ENCODE measurements at regions of chr2 and their contacts with region 1.

Region 1: DNA sequence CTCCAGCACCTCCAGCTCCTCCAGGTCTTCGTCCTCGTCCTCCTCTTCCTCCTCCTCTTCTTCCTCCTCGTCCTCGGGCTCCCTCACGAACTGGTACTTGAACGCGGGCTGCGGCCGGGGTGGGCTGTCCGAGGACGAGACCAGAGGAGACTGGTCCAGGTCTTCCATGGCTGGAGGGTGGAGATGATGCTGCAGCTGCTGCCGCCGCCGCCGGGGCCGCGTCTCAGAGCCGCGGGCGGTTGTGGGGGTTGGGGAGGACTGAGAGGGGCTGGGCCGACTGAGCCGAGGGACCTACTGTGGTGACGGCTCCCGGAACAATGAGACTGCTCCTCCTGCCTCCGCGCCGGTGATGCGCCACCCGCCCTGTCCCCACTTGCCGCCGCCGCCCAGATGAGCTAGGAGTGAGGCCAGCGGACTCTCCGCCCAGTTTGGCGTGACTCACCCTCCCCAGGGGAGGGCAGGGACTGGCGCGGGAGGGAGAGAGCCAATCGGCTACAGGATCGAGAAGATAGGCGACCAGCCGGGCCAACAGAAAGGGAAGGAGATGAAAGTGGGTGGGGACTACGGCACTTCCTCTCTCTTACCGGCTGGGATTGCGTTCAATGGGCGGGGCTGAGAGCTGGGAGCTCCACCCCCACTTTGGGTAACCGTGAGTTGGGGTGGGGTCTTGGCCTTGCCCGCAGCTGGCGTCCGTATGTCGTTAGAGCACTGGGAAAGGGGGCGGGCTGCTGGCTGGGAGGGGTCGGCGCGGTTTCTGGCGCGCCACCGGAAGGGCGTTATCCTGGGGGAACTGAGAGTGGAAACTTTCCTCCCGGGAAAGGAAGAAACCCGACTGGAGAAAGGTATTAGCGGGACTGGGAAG is at the start of gene RTN4:
- DNase-seq: peak; percentile 92 to 100 (median 95)
- ATAC-seq: peak; percentile 75
- H3K4me3 ChIP-seq: peak within 1 kb of the TSS; percentile 89
- H3K27ac ChIP-seq: peak within 1 kb of the TSS; percentile 96
- H3K4me1 ChIP-seq: peaks cover 7 to 12% of the 10 kb centered on the region in 2 experiments; a peak in 3 of 5 replicates
- H3K27me3 ChIP-seq: no peaks in the 10 kb centered on the region
- CTCF ChIP-seq: peak in 1 of 3 experiments; percentile 16; a peak in 2 of 6 replicates
- EP300 ChIP-seq: no peak
- POLR2A ChIP-seq: peak; percentile 95
- RAD21 ChIP-seq: peak in 1 of 2 experiments; percentile 14; a peak in 1 of 4 replicates
- polyA plus RNA-seq, gene RTN4: 75.8 to 90.3 TPM

Region 2: GRCh38 chr2:55014962-55015939 is 35.1 kb before region 1 on chr2:
- CTCF ChIA-PET with region 1: interaction called, 4 read pairs
- POLR2A ChIA-PET with region 1: interaction called, 4 read pairs
- in situ Hi-C with region 1: no loop called
- intact Hi-C with region 1: loop called (anchors 2 kb)
- DNase-seq: peak in 3 of 4 experiments; percentile 22 to 61 (median 32)
- ATAC-seq: peak; percentile 64
- H3K4me3 ChIP-seq: no peak overlapping the region
- H3K27ac ChIP-seq: no peak overlapping the region
- H3K4me1 ChIP-seq: peaks cover 0 to 26% of the 10 kb centered on the region in 2 experiments; a peak in 4 of 5 replicates
- H3K27me3 ChIP-seq: no peaks in the 10 kb centered on the region
- CTCF ChIP-seq: peak; percentile 48 to 62 (median 50)
- EP300 ChIP-seq: no peak
- POLR2A ChIP-seq: no peak
- RAD21 ChIP-seq: peak in 1 of 2 experiments; percentile 58; a peak in 3 of 4 replicates

Region 3: GRCh38 chr2:55111570-55112228 is 61.3 kb after region 1 on chr2:
- CTCF ChIA-PET with region 1: no interaction called
- POLR2A ChIA-PET with region 1: interaction called, 24 read pairs
- in situ Hi-C with region 1: no loop called
- intact Hi-C with region 1: no loop called
- DNase-seq: peak; percentile 46 to 87 (median 50)
- ATAC-seq: peak; percentile 62
- H3K4me3 ChIP-seq: no peak overlapping the region
- H3K27ac ChIP-seq: peak overlapping the region; percentile 78
- H3K4me1 ChIP-seq: peaks cover 20 to 71% of the 10 kb centered on the region in 2 experiments
- H3K27me3 ChIP-seq: no peaks in the 10 kb centered on the region
- CTCF ChIP-seq: no peak
- EP300 ChIP-seq: peak; percentile 52
- POLR2A ChIP-seq: peak; percentile 55
- RAD21 ChIP-seq: peak in 1 of 2 experiments; percentile 13; a peak in 2 of 4 replicates

Region 4: DNA sequence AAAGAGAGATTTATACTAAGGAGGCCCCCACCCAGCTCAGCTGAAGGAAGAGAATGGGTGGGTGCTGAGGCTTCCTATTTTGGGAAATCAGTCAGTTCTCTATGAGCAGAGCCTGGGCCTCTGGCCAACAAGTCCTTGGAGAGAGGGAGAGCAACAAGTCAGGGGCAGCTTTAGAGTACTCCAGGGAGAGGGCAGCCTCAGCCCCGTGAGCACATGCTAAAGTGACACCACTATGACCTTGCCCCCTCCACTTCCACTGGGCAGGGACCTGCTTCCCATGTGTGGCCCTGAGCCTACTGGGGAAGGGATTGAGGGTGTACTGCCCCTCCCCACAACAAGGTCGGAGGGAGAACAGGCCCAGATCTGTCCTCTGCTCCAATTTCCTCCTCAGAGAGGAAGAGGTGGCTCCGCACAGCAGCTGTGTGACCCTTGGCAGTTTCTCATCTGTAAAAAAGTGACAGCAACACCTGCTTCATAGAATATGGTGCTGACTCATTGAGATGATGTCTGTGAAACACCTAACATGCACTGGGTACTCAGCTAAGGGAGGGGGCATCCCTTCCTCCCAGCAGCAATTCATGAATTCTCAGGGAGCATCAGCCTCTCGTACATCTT is 108.8 kb after region 1 on chr2:
- CTCF ChIA-PET with region 1: interaction called, 3 read pairs
- POLR2A ChIA-PET with region 1: interaction called, 19 read pairs
- in situ Hi-C with region 1: no loop called
- intact Hi-C with region 1: no loop called
- DNase-seq: peak in 3 of 4 experiments; percentile 25 to 44 (median 32)
- ATAC-seq: peak; percentile 29
- H3K4me3 ChIP-seq: no peak overlapping the region
- H3K27ac ChIP-seq: no peak overlapping the region; the same call in 2 of the 3 replicates
- H3K4me1 ChIP-seq: peaks cover 18 to 41% of the 10 kb centered on the region in 2 experiments
- H3K27me3 ChIP-seq: no peaks in the 10 kb centered on the region
- CTCF ChIP-seq: no peak
- EP300 ChIP-seq: no peak
- POLR2A ChIP-seq: no peak
- RAD21 ChIP-seq: no peak

Region 5: GRCh38 chr2:55223958-55224760 is 173.8 kb after region 1 on chr2:
- CTCF ChIA-PET with region 1: no interaction called
- POLR2A ChIA-PET with region 1: interaction called, 17 read pairs
- in situ Hi-C with region 1: no loop called
- intact Hi-C with region 1: no loop called
- DNase-seq: peak in 2 of 4 experiments; percentile 33 to 67
- ATAC-seq: peak; percentile 41
- H3K4me3 ChIP-seq: peak overlapping the region; percentile 50; the same call in 1 of the 2 replicates
- H3K27ac ChIP-seq: peak overlapping the region; percentile 89
- H3K4me1 ChIP-seq: peaks cover 13 to 41% of the 10 kb centered on the region in 2 experiments
- H3K27me3 ChIP-seq: no peaks in the 10 kb centered on the region
- CTCF ChIP-seq: no peak
- EP300 ChIP-seq: no peak
- POLR2A ChIP-seq: peak; percentile 62; the same call in 1 of the 2 replicates
- RAD21 ChIP-seq: no peak

Region 6: DNA sequence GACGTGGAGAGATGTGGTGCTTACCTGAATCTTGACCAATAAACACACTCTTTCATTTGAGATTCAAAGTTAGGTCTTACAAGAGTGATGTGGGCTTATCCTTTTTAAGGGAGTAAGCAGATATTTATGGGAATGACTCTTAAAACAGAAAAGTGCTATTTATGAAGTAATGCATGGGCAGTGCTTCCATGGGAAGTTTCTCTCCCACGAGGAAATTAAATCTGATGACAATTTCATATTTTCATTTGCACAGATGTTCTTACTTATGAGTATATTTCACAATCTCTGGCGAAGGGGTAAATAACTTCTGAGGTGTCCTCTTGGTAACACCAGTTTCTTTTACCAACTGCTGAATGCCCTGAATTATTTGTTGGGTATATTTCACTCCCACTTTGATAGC is 622.3 kb after region 1 on chr2:
- CTCF ChIA-PET with region 1: no interaction called
- POLR2A ChIA-PET with region 1: no interaction called
- in situ Hi-C with region 1: no loop called
- intact Hi-C with region 1: no loop called
- DNase-seq: no peak
- ATAC-seq: no peak
- H3K4me3 ChIP-seq: no peak overlapping the region
- H3K27ac ChIP-seq: no peak overlapping the region
- H3K4me1 ChIP-seq: no peaks in the 10 kb centered on the region
- H3K27me3 ChIP-seq: no peaks in the 10 kb centered on the region
- CTCF ChIP-seq: no peak
- EP300 ChIP-seq: no peak
- POLR2A ChIP-seq: no peak; the same call in 1 of the 2 replicates
- RAD21 ChIP-seq: no peak

Measured in K562 (cell line).